T-cell (primary cell): ENCODE measurements at regions of chr3 and their contacts with region 1.

Region 1: DNA sequence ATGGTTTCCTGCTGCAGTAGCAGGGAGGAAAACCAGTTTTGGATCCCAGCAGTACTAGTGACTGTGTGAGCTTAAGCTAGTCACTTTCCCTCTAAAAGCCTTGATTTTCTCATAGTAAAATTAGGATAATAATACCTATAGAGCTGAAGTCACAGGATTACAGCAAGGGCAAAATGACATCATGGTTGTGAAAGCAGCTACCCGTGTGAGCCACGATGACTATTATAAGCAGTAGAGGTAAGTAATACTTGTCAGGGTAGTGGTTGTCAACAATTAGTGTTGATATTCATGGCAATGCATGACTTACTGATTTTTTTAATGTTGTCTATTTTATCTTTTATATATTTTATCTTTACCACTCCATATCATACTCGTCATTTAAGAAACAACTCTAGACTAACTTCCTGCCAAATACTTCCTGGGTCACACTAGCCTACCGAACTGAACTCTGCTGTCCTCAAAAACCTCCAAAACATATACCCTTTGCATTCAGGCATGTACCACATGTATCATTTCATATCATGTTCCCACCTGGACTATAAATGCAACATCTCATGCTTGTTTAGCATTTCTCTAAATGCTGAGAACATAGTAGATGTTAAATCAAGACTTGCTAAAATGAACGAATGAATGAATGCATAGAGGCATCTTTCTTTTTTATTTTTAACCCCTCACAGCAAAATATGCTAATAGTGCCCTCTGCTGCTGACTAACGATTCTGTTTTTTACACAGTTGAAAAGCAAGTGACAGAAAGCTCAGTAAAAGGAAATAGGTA is 172.6 kb downstream of the P3H2 start:
- DNase-seq: peak in 1 of 35 experiments; percentile 32
- ATAC-seq: no peak
- H3K4me3 ChIP-seq: no peak overlapping the region
- H3K4me3 Mint-ChIP-seq: no peak overlapping the region
- H3K27ac ChIP-seq: no peak overlapping the region
- H3K27ac Mint-ChIP-seq: no peak overlapping the region
- H3K4me1 ChIP-seq: peaks cover 0 to 3% of the 10 kb centered on the region in 2 experiments
- H3K4me1 Mint-ChIP-seq: peaks cover 4 to 9% (median 8%) of the 10 kb centered on the region in 3 donors
- H3K27me3 ChIP-seq: no peaks in the 10 kb centered on the region
- H3K27me3 Mint-ChIP-seq: peaks cover 5 to 9% of the 10 kb centered on the region in 2 donors

Region 2: DNA sequence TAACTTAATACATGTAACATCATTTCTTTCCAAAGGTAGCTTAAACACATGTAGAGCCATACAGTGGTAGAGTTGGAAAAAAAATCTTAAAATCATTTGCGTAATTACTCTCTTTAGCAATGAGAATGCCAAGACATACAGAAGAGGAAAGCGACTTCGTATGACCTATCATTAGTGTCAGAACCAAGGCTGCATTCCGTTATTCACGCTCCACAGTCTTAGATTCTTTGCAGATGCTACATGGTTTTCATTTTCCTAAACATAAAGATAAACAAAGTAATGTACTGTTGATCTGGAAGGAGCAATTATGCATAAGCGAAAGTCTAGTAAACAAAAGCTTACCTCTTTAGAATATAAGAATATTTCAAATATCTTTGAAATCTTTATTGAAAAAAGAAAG is 1186.7 kb before region 1 on chr3:
- CTCF ChIA-PET with region 1: no interaction called
- POLR2A ChIA-PET with region 1: interaction called in 1 of 2 experiments, 15 read pairs
- DNase-seq: no peak
- ATAC-seq: no peak
- H3K4me3 ChIP-seq: no peak overlapping the region
- H3K4me3 Mint-ChIP-seq: no peak overlapping the region
- H3K27ac ChIP-seq: no peak overlapping the region
- H3K27ac Mint-ChIP-seq: no peak overlapping the region
- H3K4me1 ChIP-seq: no peaks in the 10 kb centered on the region
- H3K4me1 Mint-ChIP-seq: peaks cover 0 to 3% (median 0%) of the 10 kb centered on the region in 3 donors
- H3K27me3 ChIP-seq: no peaks in the 10 kb centered on the region
- H3K27me3 Mint-ChIP-seq: no peaks in the 10 kb centered on the region

Region 3: DNA sequence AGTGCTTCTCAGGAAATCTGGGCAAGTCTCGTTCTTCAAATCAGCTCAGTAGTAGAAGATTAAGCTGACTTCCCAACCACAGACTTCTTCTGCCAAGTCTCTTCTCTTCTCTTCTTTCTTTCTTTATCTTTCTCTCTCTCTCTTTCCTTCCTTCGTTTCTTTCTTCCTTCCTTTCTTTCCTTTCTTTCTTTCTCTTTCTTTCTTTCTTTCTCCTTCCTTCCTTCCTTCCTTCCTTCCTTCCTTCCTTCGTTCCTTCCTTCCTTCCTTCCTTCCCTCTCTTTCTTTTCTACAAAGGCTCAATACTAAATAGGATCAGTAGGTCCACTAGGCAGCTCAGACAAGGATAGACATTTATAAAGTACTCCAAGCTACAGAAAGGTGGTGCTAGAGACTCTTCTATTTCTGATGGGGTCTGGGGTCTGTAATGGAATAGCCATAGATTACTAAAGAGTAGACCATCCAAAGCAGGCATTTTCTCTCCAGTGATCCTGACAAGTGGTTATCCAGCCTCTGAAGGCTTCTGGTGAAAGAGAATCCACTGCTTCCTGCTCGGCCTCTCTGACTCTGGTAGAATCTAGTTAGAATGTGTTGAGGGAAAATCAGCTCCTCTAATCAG is 675.5 kb before region 1 on chr3:
- CTCF ChIA-PET with region 1: interaction called, 5 to 14 read pairs
- POLR2A ChIA-PET with region 1: interaction called in 1 of 2 experiments, 3 read pairs
- DNase-seq: peak in 3 of 35 experiments; percentile 6 to 44 (median 7)
- ATAC-seq: peak; percentile 48 to 56 (median 50)
- H3K4me3 ChIP-seq: no peak overlapping the region
- H3K4me3 Mint-ChIP-seq: no peak overlapping the region
- H3K27ac ChIP-seq: no peak overlapping the region
- H3K27ac Mint-ChIP-seq: peak overlapping the region in 1 of 2 donors; percentile 5
- H3K4me1 ChIP-seq: peaks cover 5 to 32% of the 10 kb centered on the region in 2 experiments
- H3K4me1 Mint-ChIP-seq: peaks cover 21 to 36% (median 24%) of the 10 kb centered on the region in 3 donors
- H3K27me3 ChIP-seq: no peaks in the 10 kb centered on the region
- H3K27me3 Mint-ChIP-seq: no peaks in the 10 kb centered on the region

Region 4: DNA sequence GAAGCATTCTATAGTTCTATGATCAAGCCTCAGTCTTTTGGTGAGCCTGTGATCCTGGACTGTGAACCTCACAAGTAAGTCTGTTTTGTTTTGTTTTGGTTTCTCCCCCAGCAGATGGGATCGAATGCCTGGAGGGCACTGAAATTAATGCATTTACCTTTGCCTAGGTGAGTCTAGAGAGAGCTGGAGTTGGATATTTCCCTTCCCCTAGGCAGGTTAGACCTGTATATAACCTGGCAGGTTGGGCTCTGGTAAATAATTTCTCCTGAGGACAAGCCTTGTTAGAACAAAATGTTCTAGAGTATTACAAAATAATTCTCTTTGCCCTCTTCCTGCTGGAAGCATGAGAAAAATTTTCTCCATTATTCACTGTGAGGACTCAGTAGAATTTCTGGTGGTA is 564.5 kb before region 1 on chr3:
- CTCF ChIA-PET with region 1: no interaction called
- POLR2A ChIA-PET with region 1: interaction called in 1 of 2 experiments, 11 read pairs
- DNase-seq: no peak
- ATAC-seq: no peak
- H3K4me3 ChIP-seq: no peak overlapping the region
- H3K4me3 Mint-ChIP-seq: no peak overlapping the region
- H3K27ac ChIP-seq: no peak overlapping the region
- H3K27ac Mint-ChIP-seq: no peak overlapping the region
- H3K4me1 ChIP-seq: no peaks in the 10 kb centered on the region
- H3K4me1 Mint-ChIP-seq: no peaks in the 10 kb centered on the region
- H3K27me3 ChIP-seq: no peaks in the 10 kb centered on the region
- H3K27me3 Mint-ChIP-seq: no peaks in the 10 kb centered on the region

Region 5: GRCh38 chr3:189561243-189561642 is 386.9 kb before region 1 on chr3:
- CTCF ChIA-PET with region 1: no interaction called
- POLR2A ChIA-PET with region 1: interaction called in 1 of 2 experiments, 12 read pairs
- DNase-seq: no peak
- ATAC-seq: no peak
- H3K4me3 ChIP-seq: no peak overlapping the region
- H3K4me3 Mint-ChIP-seq: no peak overlapping the region
- H3K27ac ChIP-seq: no peak overlapping the region
- H3K27ac Mint-ChIP-seq: no peak overlapping the region
- H3K4me1 ChIP-seq: no peaks in the 10 kb centered on the region
- H3K4me1 Mint-ChIP-seq: peaks cover 4 to 14% (median 4%) of the 10 kb centered on the region in 3 donors
- H3K27me3 ChIP-seq: no peaks in the 10 kb centered on the region
- H3K27me3 Mint-ChIP-seq: no peaks in the 10 kb centered on the region

Region 6: GRCh38 chr3:190084983-190085382 is 136.8 kb after region 1 on chr3:
- CTCF ChIA-PET with region 1: no interaction called
- POLR2A ChIA-PET with region 1: interaction called in 1 of 2 experiments, 10 read pairs
- DNase-seq: no peak
- ATAC-seq: no peak
- H3K4me3 ChIP-seq: no peak overlapping the region
- H3K4me3 Mint-ChIP-seq: no peak overlapping the region
- H3K27ac ChIP-seq: no peak overlapping the region
- H3K27ac Mint-ChIP-seq: no peak overlapping the region
- H3K4me1 ChIP-seq: no peaks in the 10 kb centered on the region
- H3K4me1 Mint-ChIP-seq: no peaks in the 10 kb centered on the region
- H3K27me3 ChIP-seq: no peaks in the 10 kb centered on the region
- H3K27me3 Mint-ChIP-seq: peaks cover 4 to 16% of the 10 kb centered on the region in 2 donors